ENCODE measurements at regions of chr11 and their contacts with region 1.

Region 1: GRCh38 chr11:60204922-60205321 is 22.0 kb upstream of the MS4A6A start:
- DNase-seq: no peak
- ATAC-seq: peak; percentile 72
- H3K4me3 ChIP-seq: no peak overlapping the region
- H3K27ac ChIP-seq: no peak overlapping the region
- H3K4me1 ChIP-seq: peaks cover 8% of the 10 kb centered on the region
- H3K27me3 ChIP-seq: no peaks in the 10 kb centered on the region
- CTCF ChIP-seq: no peak
- EP300 ChIP-seq: peak; percentile 76 to 90
- POLR2A ChIP-seq: no peak
- RAD21 ChIP-seq: no peak

Region 2: DNA sequence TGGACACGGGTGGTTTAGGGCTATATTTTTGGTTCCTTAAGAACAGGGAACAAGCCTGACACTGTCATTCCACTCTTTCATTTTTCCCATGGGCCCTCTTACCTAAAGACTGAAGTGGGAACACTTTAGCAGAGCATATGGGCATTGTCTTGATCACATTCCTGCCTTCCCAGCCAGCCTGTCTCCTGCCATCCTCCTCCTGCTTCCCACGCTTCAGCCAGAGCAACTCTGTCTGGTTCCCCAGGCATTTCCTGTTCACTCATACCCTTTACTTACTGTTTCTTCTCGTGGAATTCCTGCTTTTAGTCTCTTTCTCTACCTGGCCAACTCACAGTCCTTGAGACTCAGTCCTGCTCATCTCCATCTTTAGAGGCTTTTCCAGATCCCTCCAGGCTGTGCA is 417.1 kb before region 1 on chr11:
- CTCF ChIA-PET with region 1: no interaction called
- POLR2A ChIA-PET with region 1: no interaction called
- RAD21 ChIA-PET with region 1: no interaction called
- SMC1A ChIA-PET with region 1: no interaction called
- in situ Hi-C with region 1: no loop called
- intact Hi-C with region 1: no loop called
- DNase-seq: no peak
- ATAC-seq: no peak
- H3K4me3 ChIP-seq: no peak overlapping the region
- H3K27ac ChIP-seq: no peak overlapping the region
- H3K4me1 ChIP-seq: no peaks in the 10 kb centered on the region
- H3K27me3 ChIP-seq: no peaks in the 10 kb centered on the region
- CTCF ChIP-seq: no peak
- EP300 ChIP-seq: no peak
- POLR2A ChIP-seq: no peak
- RAD21 ChIP-seq: no peak

Region 3: DNA sequence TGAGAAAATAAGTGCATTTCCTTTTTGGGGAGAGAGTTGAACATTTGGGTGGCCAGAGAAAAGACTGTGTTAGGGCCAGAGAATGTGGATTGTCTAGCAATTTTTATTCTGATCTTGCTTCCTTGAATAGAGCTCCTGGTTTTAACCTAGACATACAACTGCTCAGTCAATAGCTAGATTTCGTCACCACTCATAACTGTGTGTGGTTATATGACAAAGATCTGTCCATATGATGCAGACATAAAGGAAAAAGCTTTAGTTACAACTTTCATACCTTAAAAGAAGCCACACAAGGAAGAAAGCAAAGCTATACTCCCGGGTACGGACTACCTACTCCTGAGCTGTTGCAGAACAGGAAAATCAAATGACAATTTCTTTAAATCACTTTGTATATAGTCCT is 59.2 kb before region 1 on chr11:
- CTCF ChIA-PET with region 1: no interaction called
- POLR2A ChIA-PET with region 1: no interaction called
- RAD21 ChIA-PET with region 1: no interaction called
- SMC1A ChIA-PET with region 1: no interaction called
- in situ Hi-C with region 1: no loop called
- intact Hi-C with region 1: no loop called
- DNase-seq: no peak
- ATAC-seq: no peak
- H3K4me3 ChIP-seq: no peak overlapping the region
- H3K27ac ChIP-seq: no peak overlapping the region
- H3K4me1 ChIP-seq: no peaks in the 10 kb centered on the region
- H3K27me3 ChIP-seq: no peaks in the 10 kb centered on the region
- CTCF ChIP-seq: no peak
- EP300 ChIP-seq: no peak
- POLR2A ChIP-seq: no peak
- RAD21 ChIP-seq: no peak

Region 4: GRCh38 chr11:60175860-60176275 is 29.1 kb before region 1 on chr11:
- CTCF ChIA-PET with region 1: interaction called, 4 read pairs
- POLR2A ChIA-PET with region 1: no interaction called
- RAD21 ChIA-PET with region 1: no interaction called
- SMC1A ChIA-PET with region 1: interaction called, 3 read pairs
- in situ Hi-C with region 1: no loop called
- intact Hi-C with region 1: loop called (anchors 1 kb)
- DNase-seq: peak; percentile 80
- ATAC-seq: peak; percentile 96
- H3K4me3 ChIP-seq: no peak overlapping the region
- H3K27ac ChIP-seq: no peak overlapping the region
- H3K4me1 ChIP-seq: peaks cover 9% of the 10 kb centered on the region
- H3K27me3 ChIP-seq: no peaks in the 10 kb centered on the region
- CTCF ChIP-seq: no peak
- EP300 ChIP-seq: no peak
- POLR2A ChIP-seq: no peak
- RAD21 ChIP-seq: no peak

Region 5: DNA sequence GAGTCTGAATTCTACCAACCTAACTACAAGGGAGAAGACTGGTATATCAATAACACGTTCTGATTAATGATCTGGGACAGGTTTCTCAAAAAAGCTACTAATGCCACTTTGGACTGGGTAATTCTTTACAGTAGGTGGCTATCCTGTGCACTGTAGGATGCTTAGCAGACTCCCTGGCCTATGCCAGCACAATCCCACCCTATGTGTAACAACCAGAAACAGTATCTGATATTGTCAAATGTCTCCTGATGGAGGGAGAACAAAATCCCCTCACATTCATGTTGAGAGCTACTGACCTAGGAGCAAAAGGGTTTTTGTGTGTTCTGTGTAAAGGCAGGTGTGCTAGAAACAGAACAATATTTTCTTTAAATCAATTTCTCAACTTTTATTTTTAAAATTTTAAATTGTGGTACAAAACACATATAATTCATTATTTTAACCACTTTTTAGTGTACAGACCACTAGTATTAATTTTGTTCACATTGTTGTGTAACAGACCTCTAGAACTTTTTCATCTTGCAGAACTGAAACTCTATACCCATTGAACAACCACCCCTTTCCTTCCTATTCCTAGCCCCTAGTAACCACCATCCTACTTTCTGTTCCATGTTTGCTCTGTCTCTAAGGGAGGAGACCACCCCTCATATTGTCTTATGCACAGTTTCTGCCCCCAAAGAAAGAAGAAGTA is 20.0 kb before region 1 on chr11:
- CTCF ChIA-PET with region 1: interaction called, 3 read pairs
- POLR2A ChIA-PET with region 1: interaction called, 4 read pairs
- RAD21 ChIA-PET with region 1: interaction called, 4 read pairs
- SMC1A ChIA-PET with region 1: interaction called, 14 read pairs
- in situ Hi-C with region 1: no loop called
- intact Hi-C with region 1: no loop called
- DNase-seq: peak; percentile 53
- ATAC-seq: peak; percentile 86
- H3K4me3 ChIP-seq: no peak overlapping the region
- H3K27ac ChIP-seq: no peak overlapping the region
- H3K4me1 ChIP-seq: peaks cover 16% of the 10 kb centered on the region
- H3K27me3 ChIP-seq: no peaks in the 10 kb centered on the region
- CTCF ChIP-seq: no peak
- EP300 ChIP-seq: 0 out of 4 replicates have a peak, but pooled peaks of 1 of the 2 experiments have one; percentile 37
- POLR2A ChIP-seq: no peak
- RAD21 ChIP-seq: no peak

Region 6: DNA sequence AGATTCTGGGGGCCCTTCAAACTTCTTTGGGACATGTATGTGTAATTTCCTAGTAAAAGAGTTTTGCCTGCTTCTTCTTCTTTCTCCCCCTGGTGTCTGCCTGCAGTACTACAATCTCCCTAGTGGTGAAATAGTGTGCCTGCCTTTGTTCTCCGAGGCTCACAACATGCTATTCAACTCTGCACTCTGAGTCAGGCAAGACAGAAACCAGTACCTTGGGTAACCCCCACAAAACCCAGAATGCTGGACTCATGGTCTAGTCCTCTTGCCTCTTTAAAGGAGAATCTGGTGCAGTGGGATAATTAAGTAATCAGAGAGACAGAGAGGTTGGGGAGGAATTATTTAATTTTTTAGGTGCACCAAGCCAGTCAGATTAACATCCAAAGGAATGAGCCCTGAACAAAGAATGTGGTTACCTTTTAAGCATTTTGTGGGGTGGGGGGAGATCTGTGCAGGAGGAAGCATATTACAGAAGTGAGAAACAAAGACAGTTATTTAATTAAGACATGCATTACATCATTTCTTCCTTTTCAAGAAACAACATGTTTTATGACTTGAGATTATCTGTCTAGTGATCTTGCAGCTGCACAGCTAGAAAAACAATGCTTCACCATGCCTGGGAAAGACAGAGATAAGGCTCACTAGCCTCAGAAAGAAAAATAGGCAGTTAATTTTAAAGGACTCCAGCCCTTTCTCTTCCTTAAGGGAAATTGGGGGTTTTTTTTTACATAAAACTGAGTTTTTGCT is 11.1 kb before region 1 on chr11:
- CTCF ChIA-PET with region 1: interaction called, 12 read pairs
- POLR2A ChIA-PET with region 1: interaction called, 4 read pairs
- RAD21 ChIA-PET with region 1: interaction called, 17 read pairs
- SMC1A ChIA-PET with region 1: interaction called, 36 read pairs
- in situ Hi-C with region 1: no loop called
- intact Hi-C with region 1: no loop called
- DNase-seq: peak; percentile 80
- ATAC-seq: peak; percentile 99
- H3K4me3 ChIP-seq: 0 out of 2 replicates have a peak overlapping the region, but pooled peaks have one; percentile 28
- H3K27ac ChIP-seq: peak overlapping the region; percentile 70
- H3K4me1 ChIP-seq: peaks cover 24% of the 10 kb centered on the region
- H3K27me3 ChIP-seq: no peaks in the 10 kb centered on the region
- CTCF ChIP-seq: peak; percentile 82 to 96 (median 94)
- EP300 ChIP-seq: peak; percentile 40 to 47; a peak in 2 of 4 replicates
- POLR2A ChIP-seq: no peak
- RAD21 ChIP-seq: peak; percentile 76

Region 7: DNA sequence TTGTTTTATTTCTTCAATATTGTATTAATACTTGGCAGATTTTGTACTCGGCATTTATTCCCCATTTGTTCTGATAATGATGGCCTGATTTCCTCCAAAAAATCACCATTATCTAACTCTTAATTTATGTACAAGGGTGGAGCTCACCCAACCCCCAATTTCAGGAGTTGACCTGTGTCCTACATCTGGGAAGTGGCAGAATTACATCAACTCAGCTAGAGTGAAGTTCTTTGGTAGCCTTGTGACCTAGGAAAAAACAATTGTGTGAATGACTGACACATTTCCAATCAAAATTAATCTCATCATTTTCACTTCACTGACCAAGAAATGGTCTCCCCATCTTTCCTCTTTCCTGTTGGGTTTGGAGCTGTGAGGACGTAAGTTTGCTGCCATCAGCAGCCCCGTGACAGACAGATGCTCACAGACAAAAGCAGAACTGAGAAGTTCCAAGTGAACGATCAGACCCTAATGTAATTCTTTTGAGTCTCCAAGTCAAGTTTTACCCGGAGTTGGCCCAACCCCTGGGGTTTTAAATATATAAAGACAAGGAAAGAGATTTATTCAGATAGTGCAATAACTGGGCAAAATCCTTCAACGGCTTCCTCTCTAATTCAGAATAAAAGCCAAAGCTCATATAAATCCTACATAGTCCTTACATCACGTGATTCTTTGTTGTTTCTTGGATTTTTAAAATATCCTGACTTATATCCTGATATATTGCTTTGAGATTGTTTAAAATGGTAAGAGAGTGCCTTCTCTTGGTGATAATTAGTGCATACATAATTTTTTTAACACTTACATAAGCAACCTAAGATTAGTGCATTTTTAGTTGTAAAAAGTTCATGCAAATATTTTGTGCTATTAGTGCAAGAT is 105.7 kb after region 1 on chr11:
- CTCF ChIA-PET with region 1: interaction called, 4 read pairs
- POLR2A ChIA-PET with region 1: no interaction called
- RAD21 ChIA-PET with region 1: no interaction called
- SMC1A ChIA-PET with region 1: interaction called, 3 read pairs
- in situ Hi-C with region 1: no loop called
- intact Hi-C with region 1: loop called (anchors 10 kb)
- DNase-seq: peak; percentile 64
- ATAC-seq: peak; percentile 82
- H3K4me3 ChIP-seq: no peak overlapping the region
- H3K27ac ChIP-seq: peak overlapping the region; percentile 64
- H3K4me1 ChIP-seq: peaks cover 18% of the 10 kb centered on the region
- H3K27me3 ChIP-seq: no peaks in the 10 kb centered on the region
- CTCF ChIP-seq: no peak
- EP300 ChIP-seq: peak; percentile 94 to 95; a peak in 3 of 4 replicates
- POLR2A ChIP-seq: no peak
- RAD21 ChIP-seq: no peak

Measured in GM12878 (cell line).